ENCODE measurements at regions of chr17 and their contacts with region 1.

Region 1: DNA sequence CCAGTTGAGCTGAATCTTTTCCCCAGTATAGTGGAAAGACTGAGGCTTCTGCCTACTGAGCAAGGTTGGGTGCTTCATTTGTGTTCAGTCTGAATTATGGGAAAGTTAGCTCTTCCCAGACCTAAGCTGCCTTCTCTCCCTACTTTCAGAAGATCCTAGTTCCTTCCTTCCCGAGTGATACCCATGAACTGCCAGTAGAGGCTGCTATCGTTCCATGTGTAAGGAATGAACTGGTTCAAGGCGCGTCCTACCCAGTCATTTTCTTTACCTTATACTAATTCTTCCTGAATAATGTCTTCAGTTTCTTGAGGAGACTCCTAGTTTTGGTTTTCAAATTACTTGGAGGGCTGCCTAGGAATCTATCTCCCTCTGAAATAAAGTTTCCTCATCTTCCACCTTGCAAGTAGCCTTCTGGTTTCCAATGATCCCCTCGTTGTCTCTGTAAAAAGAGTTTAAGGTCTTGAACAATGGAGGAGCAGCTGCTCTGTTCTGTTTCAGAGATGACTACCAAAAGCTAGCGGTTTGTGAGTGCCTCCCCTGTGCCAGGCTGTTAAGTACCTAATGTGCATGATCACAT is 934 bp upstream of the AOC2 start:
- DNase-seq: no peak
- ATAC-seq: peak; percentile 83 to 91 (median 85)
- H3K4me3 ChIP-seq: no peak overlapping the region
- H3K27ac ChIP-seq: no peak overlapping the region
- H3K4me1 ChIP-seq: no peaks in the 10 kb centered on the region
- H3K27me3 ChIP-seq: no peaks in the 10 kb centered on the region
- CTCF ChIP-seq: peak; percentile 91 to 95 (median 94)
- POLR2A ChIP-seq: no peak

Region 2: GRCh38 chr17:42918902-42919521 is 75.6 kb after region 1 on chr17:
- intact Hi-C with region 1: loop called in 1 of 2 experiments (anchors 5 kb)
- DNase-seq: no peak
- ATAC-seq: peak; percentile 56 to 78 (median 74)
- H3K4me3 ChIP-seq: no peak overlapping the region
- H3K27ac ChIP-seq: peak overlapping the region in 2 of 3 donors; percentile 7 to 56
- H3K4me1 ChIP-seq: peaks cover 0 to 37% (median 12%) of the 10 kb centered on the region in 4 donors
- H3K27me3 ChIP-seq: no peaks in the 10 kb centered on the region
- CTCF ChIP-seq: no peak
- POLR2A ChIP-seq: no peak

Region 3: GRCh38 chr17:42928714-42929496 is 85.5 kb after region 1 on chr17:
- intact Hi-C with region 1: loop called (anchors 5 kb)
- DNase-seq: no peak
- ATAC-seq: peak; percentile 96 to 99 (median 98)
- H3K4me3 ChIP-seq: no peak overlapping the region
- H3K27ac ChIP-seq: peak overlapping the region in 2 of 3 donors; percentile 44 to 56
- H3K4me1 ChIP-seq: peaks cover 0 to 7% (median 3%) of the 10 kb centered on the region in 4 donors
- H3K27me3 ChIP-seq: no peaks in the 10 kb centered on the region
- CTCF ChIP-seq: peak; percentile 75 to 81 (median 75)
- POLR2A ChIP-seq: no peak

Measured in right lobe of liver (tissue), 6 donors.